CD8-positive, alpha-beta T cell (primary cell): ENCODE measurements at regions of chr6 and their contacts with region 1.

Region 1: DNA sequence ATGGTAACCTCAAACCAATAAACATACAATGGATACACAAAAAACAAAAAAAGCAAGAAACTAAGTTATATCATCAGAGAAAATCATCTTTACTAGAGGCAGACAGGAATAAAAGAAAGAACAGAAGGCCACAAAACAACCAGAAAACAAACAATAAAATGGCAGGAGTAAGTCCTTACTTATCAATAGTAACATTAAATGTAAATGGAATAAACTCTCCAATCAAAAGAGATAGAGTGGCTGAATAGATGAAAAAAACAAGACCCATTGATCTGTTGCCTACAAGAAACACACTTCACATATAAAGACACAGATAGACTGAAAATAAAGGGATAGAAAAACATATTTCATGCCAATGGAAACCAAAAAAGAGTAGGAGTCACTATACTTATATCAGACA is 81.3 kb upstream of the GJE1 start:
- DNase-seq: no peak
- ATAC-seq: no peak
- H3K4me3 ChIP-seq: no peak overlapping the region
- H3K4me3 Mint-ChIP-seq: no peak overlapping the region
- H3K27ac ChIP-seq: no peak overlapping the region
- H3K27ac Mint-ChIP-seq: no peak overlapping the region
- H3K4me1 ChIP-seq: no peaks in the 10 kb centered on the region
- H3K4me1 Mint-ChIP-seq: no peaks in the 10 kb centered on the region
- H3K27me3 ChIP-seq: no peaks in the 10 kb centered on the region
- H3K27me3 Mint-ChIP-seq: peaks cover 7% of the 10 kb centered on the region
- CTCF ChIP-seq: no peak

Region 2: GRCh38 chr6:143260857-143261256 is 1209.5 kb after region 1 on chr6:
- CTCF ChIA-PET with region 1: no interaction called
- POLR2A ChIA-PET with region 1: no interaction called
- intact Hi-C with region 1: loop called in 1 of 2 experiments (anchors 5 kb)
- DNase-seq: no peak
- ATAC-seq: no peak
- H3K4me3 ChIP-seq: no peak overlapping the region
- H3K4me3 Mint-ChIP-seq: no peak overlapping the region
- H3K27ac ChIP-seq: no peak overlapping the region
- H3K27ac Mint-ChIP-seq: no peak overlapping the region
- H3K4me1 ChIP-seq: no peaks in the 10 kb centered on the region
- H3K4me1 Mint-ChIP-seq: no peaks in the 10 kb centered on the region
- H3K27me3 ChIP-seq: no peaks in the 10 kb centered on the region
- H3K27me3 Mint-ChIP-seq: no peaks in the 10 kb centered on the region
- CTCF ChIP-seq: no peak

Region 3: GRCh38 chr6:143734641-143735063 is 1683.2 kb after region 1 on chr6:
- CTCF ChIA-PET with region 1: no interaction called
- POLR2A ChIA-PET with region 1: no interaction called
- intact Hi-C with region 1: loop called in 1 of 2 experiments (anchors 5 kb)
- DNase-seq: no peak
- ATAC-seq: no peak
- H3K4me3 ChIP-seq: no peak overlapping the region
- H3K4me3 Mint-ChIP-seq: no peak overlapping the region
- H3K27ac ChIP-seq: no peak overlapping the region
- H3K27ac Mint-ChIP-seq: no peak overlapping the region
- H3K4me1 ChIP-seq: no peaks in the 10 kb centered on the region
- H3K4me1 Mint-ChIP-seq: peaks cover 18% of the 10 kb centered on the region
- H3K27me3 ChIP-seq: no peaks in the 10 kb centered on the region
- H3K27me3 Mint-ChIP-seq: no peaks in the 10 kb centered on the region
- CTCF ChIP-seq: no peak